Panc1 (cell line): ENCODE measurements at regions of chr11 and their contacts with region 1.

Region 1: DNA sequence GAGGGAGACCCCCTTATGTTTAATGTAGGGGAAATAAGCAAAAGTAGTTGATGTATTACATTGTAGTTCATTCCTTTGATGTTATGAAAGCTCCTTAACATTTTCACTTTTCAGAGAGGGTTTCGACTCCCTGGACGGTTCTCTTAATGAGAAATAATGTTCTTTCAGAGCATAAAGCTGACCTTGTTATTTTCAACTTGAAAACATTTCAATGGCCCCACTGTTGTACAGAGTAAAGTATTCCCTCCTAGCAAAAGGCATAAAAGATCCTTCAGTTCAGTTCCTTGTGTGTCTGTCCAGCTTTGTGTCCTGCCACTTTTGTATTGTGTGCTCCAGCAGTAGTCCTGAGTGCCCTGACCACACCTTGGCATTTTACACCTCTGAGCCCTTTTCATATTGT is 63.9 kb downstream of the UVRAG start:
- DNase-seq: no peak
- ATAC-seq: no peak
- H3K4me3 ChIP-seq: no peak overlapping the region
- H3K27ac ChIP-seq: no peak overlapping the region
- H3K4me1 ChIP-seq: no peaks in the 10 kb centered on the region
- H3K27me3 ChIP-seq: no peaks in the 10 kb centered on the region
- CTCF ChIP-seq: no peak

Region 2: DNA sequence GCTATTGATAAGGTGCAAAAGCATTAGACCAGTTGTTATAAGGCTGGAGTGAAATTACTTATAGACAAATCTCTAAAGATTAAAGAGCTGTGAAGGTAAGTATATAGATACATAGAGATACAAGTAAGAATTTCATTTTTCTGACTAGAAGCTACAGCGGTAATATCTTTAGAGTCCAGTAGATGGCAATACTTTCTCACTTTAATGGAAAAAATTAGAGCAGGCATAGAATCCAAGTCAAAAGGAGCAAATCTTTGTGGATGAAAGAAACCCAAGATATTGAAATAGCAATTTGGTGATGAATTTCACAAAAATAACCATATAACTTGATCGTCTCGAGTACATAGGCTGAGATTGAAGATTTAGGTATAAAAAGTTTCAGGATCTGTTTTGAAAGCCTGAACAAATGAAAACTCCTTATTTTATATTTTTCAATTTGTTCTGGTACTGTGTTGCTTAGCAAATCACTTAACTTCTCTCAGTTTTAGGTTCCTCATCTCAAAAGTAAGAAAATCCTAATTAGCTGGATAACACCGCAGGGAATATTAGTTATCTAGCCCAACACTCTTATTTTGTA is 18.0 kb after region 1 on chr11:
- CTCF ChIA-PET with region 1: interaction called, 11 read pairs
- POLR2A ChIA-PET with region 1: no interaction called
- in situ Hi-C with region 1: no loop called
- intact Hi-C with region 1: no loop called
- DNase-seq: peak; percentile 30
- ATAC-seq: peak; percentile 60; the same call in 1 of the 2 replicates
- H3K4me3 ChIP-seq: no peak overlapping the region
- H3K27ac ChIP-seq: no peak overlapping the region
- H3K4me1 ChIP-seq: no peaks in the 10 kb centered on the region
- H3K27me3 ChIP-seq: no peaks in the 10 kb centered on the region
- CTCF ChIP-seq: peak; percentile 77; the same call in 1 of the 2 replicates

Region 3: GRCh38 chr11:76013526-76013925 is 134.6 kb after region 1 on chr11:
- CTCF ChIA-PET with region 1: no interaction called
- POLR2A ChIA-PET with region 1: interaction called, 13 read pairs
- in situ Hi-C with region 1: no loop called
- intact Hi-C with region 1: no loop called
- DNase-seq: no peak
- ATAC-seq: no peak
- H3K4me3 ChIP-seq: no peak overlapping the region
- H3K27ac ChIP-seq: no peak overlapping the region
- H3K4me1 ChIP-seq: no peaks in the 10 kb centered on the region
- H3K27me3 ChIP-seq: no peaks in the 10 kb centered on the region
- CTCF ChIP-seq: no peak